ENCODE measurements at regions of chr13 and their contacts with region 1.

Region 1: DNA sequence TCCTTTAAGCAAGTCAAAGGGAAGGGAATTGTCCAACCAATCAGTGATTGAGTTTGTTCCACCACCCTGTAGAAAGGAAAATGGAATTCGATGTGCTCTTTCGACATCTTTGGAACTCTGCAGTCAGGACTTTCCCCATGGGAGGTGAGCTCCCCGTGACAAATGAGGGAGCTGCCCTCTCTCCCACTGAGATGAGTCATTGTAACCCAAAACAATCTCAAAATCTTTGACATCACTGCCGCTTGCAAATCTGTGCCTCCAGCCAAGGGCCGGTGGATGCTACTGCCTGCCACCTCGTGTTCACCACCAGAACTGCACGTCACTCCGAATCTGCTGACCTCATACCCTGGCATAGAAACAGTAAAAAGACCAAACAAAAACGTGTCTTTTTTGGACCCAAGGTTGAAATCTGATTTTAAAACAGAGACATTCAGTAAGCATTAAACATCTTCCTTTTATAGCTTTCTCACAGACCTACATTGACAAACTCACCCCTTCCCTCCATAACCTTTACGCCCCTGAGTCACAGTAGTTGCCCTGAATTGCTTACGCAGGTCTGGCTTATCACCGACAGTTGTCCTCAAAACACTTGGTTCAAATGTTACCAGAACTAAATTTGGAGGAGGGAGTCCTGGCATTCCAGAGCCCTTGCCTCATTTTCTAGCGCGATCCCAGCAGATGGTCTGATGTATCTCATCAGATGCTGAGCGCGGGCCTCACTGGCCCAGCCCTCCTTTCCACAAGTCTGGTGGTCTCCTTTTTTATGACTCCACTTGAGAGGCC is 105.2 kb downstream of the COL4A2 start:
- DNase-seq: peak; percentile 49
- H3K4me3 Mint-ChIP-seq: no peak overlapping the region
- H3K27ac Mint-ChIP-seq: no peak overlapping the region
- H3K4me1 Mint-ChIP-seq: peaks cover 9% of the 10 kb centered on the region
- H3K27me3 Mint-ChIP-seq: peaks cover 68% of the 10 kb centered on the region

Region 2: GRCh38 chr13:108961542-108962125 is 1450.7 kb before region 1 on chr13:
- intact Hi-C with region 1: loop called (anchors 2 kb)
- DNase-seq: no peak
- H3K4me3 Mint-ChIP-seq: no peak overlapping the region
- H3K27ac Mint-ChIP-seq: no peak overlapping the region
- H3K4me1 Mint-ChIP-seq: no peaks in the 10 kb centered on the region
- H3K27me3 Mint-ChIP-seq: peaks cover 2% of the 10 kb centered on the region

Region 3: GRCh38 chr13:110225609-110226562 is 186.4 kb before region 1 on chr13:
- intact Hi-C with region 1: loop called (anchors 1 kb)
- DNase-seq: no peak
- H3K4me3 Mint-ChIP-seq: no peak overlapping the region
- H3K27ac Mint-ChIP-seq: no peak overlapping the region
- H3K4me1 Mint-ChIP-seq: no peaks in the 10 kb centered on the region
- H3K27me3 Mint-ChIP-seq: peaks cover 20% of the 10 kb centered on the region

Region 4: DNA sequence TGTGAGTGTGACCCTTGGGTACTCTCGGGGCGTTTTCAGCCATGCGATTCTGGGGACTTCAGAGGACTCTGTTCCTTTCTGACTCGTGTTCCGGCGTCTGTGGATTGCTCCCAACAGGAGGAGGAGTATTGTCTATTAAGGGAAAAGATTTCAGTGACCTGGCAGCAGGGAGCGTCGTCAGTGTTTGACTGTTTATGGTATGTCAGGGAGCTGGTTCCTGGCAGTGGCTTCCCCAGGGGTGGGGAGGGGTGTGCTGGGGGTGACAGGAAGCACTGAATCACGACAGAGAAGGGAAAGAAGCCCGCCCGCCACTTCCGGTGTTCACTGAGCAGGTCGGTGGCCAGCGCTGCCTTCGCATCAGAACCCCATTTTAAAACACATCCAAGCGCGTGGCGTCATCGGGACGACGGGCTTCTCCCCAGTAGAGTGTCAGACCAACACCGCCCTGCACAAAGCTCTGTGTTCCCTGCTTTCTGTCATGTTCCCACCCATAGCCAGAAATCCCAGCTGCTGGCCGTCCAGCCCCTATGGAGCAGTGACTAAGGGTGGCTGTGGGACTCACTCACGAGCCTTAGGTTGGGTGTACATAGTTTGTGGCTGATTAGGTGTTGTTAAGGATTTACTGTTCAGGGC is 71.4 kb before region 1 on chr13:
- intact Hi-C with region 1: loop called (anchors 10 kb)
- DNase-seq: peak; percentile 28
- H3K4me3 Mint-ChIP-seq: peak overlapping the region; percentile 35
- H3K27ac Mint-ChIP-seq: peak overlapping the region; percentile 24
- H3K4me1 Mint-ChIP-seq: peaks cover 25% of the 10 kb centered on the region
- H3K27me3 Mint-ChIP-seq: peaks cover 24% of the 10 kb centered on the region